Stomach (tissue), 19 donors: ENCODE measurements at regions of chr21 and their contacts with region 1.

Region 1: GRCh38 chr21:42400525-42400924 is 3.2 kb upstream of the UBASH3A start:
- DNase-seq: no peak
- H3K4me3 ChIP-seq: no peak overlapping the region
- H3K27ac ChIP-seq: no peak overlapping the region
- H3K4me1 ChIP-seq: peaks cover 0 to 4% (median 1%) of the 10 kb centered on the region in 4 donors
- H3K27me3 ChIP-seq: peaks cover 0 to 7% (median 0%) of the 10 kb centered on the region in 3 donors
- CTCF ChIP-seq: no peak
- EP300 ChIP-seq: no peak
- POLR2A ChIP-seq: no peak

Region 2: GRCh38 chr21:42027822-42028765 is 372.4 kb before region 1 on chr21:
- intact Hi-C with region 1: no loop called
- DNase-seq: no peak
- H3K4me3 ChIP-seq: no peak overlapping the region
- H3K27ac ChIP-seq: no peak overlapping the region
- H3K4me1 ChIP-seq: no peaks in the 10 kb centered on the region
- H3K27me3 ChIP-seq: no peaks in the 10 kb centered on the region
- CTCF ChIP-seq: no peak
- EP300 ChIP-seq: no peak
- POLR2A ChIP-seq: no peak

Region 3: GRCh38 chr21:42299324-42300044 is 101.0 kb before region 1 on chr21:
- intact Hi-C with region 1: no loop called
- DNase-seq: no peak
- H3K4me3 ChIP-seq: no peak overlapping the region
- H3K27ac ChIP-seq: no peak overlapping the region
- H3K4me1 ChIP-seq: peaks cover 0 to 4% (median 0%) of the 10 kb centered on the region in 4 donors
- H3K27me3 ChIP-seq: peaks cover 0 to 1% (median 0%) of the 10 kb centered on the region in 3 donors
- CTCF ChIP-seq: no peak
- EP300 ChIP-seq: no peak
- POLR2A ChIP-seq: no peak

Region 4: DNA sequence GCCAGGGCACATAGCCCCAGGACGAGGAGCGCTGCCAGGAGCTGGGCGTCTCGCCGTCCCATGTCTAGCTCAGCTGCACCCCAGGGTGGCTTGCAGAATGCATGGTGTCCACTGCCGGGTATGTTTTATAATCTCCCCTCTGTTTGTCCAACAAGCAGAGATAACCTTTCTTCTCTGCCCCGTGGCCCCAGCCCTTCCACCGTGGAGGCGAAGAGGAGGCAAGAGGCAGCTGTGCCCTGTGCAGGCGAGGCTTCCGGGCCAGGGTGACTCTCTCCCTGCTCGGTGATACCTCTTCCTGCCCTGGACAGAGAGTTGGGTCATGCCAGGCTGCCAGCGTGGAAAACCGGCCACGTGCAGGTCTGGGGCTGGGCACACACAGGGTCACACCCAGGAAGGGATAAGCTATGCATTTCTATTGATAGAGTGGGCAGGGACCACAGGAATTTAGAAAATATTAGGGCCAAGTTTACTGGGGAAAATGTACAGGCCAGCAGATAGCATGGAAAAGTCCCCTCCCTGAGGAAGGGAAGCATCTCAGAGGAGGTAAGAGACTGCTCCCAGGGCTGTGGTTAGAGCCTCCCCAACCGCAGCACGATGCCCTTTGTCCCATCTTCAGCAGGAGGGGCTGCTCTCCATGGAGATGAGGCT is 49.5 kb before region 1 on chr21 and contains the start of gene TFF2:
- intact Hi-C with region 1: loop called (anchors 10 kb)
- DNase-seq: peak; percentile 78 to 80
- H3K4me3 ChIP-seq: peak within 1 kb of the TSS; percentile 18 to 30 (median 25)
- H3K27ac ChIP-seq: peak within 1 kb of the TSS; percentile 38 to 83 (median 78)
- H3K4me1 ChIP-seq: peaks cover 0 to 11% (median 2%) of the 10 kb centered on the region in 4 donors
- H3K27me3 ChIP-seq: peaks cover 0 to 23% (median 0%) of the 10 kb centered on the region in 3 donors
- CTCF ChIP-seq: no peak
- EP300 ChIP-seq: no peak
- POLR2A ChIP-seq: no peak
- total RNA-seq, gene TFF2: 2.3 to 2,979 (median 1,039) TPM